ENCODE measurements at regions of chr22 and their contacts with region 1.

Region 1: GRCh38 chr22:50326959-50327710 is at the start of gene DENND6B:
- DNase-seq: peak; percentile 69
- ATAC-seq: peak; percentile 98
- H3K4me3 ChIP-seq: peak within 1 kb of the TSS; percentile 86
- H3K27ac ChIP-seq: peak within 1 kb of the TSS; percentile 85
- H3K4me1 ChIP-seq: peaks cover 8% of the 10 kb centered on the region
- H3K27me3 ChIP-seq: no peaks in the 10 kb centered on the region
- CTCF ChIP-seq: peak; percentile 84
- POLR2A ChIP-seq: peak; percentile 67
- RAD21 ChIP-seq: peak; percentile 75
- total RNA-seq, gene DENND6B: 0.36 and 0.56 TPM in 2 replicates

Region 2: DNA sequence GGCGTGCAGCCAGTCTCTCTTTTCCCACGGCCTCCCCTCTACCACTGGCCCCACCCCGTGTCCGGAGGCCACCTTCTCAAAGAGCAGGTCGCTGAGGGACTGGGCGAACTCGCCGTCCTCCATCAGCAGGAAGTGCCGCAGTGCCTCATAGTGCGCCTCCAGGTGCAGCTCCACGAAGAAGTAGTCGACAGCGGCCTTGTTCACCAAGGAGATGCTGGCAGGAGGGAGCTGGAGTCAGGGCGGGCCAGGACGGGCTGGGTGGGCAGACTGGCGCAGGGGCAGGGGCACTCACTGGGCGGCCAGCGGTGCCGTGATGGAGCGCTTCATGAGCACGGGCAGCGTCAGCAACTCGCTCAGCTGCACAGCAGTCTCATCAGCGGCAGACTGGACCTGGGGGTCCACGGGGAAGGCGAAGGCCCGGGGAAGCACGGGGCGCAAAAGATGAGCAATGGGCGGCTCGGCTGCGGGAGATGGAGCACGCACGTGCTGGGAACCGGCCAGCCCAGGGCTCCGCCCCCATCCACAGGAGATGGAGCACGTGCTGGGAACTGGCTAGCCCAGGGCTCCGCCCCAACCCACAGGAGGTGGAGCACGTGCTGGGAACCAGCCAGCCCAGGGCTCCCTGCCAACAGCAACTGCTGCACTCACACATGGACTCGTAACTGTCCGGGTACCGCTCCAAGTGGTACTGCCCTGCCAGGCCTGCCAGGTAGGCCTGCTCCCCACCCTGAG is 108.0 kb before region 1 on chr22:
- CTCF ChIA-PET with region 1: no interaction called
- POLR2A ChIA-PET with region 1: no interaction called
- dilution Hi-C with region 1: no loop called
- in situ Hi-C with region 1: no loop called
- intact Hi-C with region 1: no loop called
- DNase-seq: peak; percentile 74
- ATAC-seq: peak; percentile 76
- H3K4me3 ChIP-seq: no peak overlapping the region
- H3K27ac ChIP-seq: no peak overlapping the region
- H3K4me1 ChIP-seq: no peaks in the 10 kb centered on the region
- H3K27me3 ChIP-seq: no peaks in the 10 kb centered on the region
- CTCF ChIP-seq: no peak
- POLR2A ChIP-seq: no peak
- RAD21 ChIP-seq: no peak

Region 3: DNA sequence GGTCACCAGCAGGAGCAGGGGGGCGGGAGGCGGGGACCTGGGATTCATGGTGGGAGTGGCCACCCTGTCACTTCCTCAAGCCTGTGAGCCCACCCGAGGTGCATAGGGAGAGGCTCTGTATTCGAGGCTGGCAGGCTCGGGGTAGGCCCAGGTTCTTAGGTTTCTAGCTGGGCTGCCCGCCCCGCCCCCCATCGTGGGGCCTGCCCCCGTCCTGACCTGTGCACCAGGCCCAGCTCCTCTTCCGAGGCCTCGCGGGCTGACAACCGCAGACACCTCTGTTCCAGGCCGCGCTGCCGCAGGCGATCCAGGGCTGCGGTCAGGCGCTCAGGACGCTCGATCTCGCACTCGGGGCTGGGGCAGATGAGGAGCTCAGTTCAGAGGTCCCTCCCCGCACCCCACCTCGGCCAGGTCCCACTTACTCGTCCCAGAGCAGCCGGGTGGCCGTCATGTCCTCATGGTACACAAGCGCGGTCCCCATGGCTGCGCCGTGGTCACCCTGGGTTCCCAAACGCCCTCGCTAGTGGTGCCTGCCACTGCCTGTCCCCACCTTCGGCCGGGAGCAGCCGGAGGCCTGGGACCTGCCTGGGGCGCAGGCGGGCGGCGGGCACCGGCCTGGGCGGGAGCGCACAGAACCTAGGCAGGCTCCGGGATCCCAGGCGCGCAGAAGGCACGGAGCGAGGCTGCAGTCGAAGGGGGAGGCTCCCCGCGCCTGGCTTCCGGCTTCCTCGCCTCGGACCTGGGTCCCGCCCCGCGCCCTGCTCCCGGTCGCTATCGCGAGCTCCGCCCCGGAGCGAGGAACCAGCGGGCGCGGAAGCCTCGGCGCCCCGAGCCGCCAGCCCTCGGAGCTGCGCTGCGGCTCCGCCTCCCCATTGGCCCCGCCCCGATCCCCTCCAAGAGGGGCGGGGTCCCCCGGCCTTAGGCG is 76.3 kb before region 1 on chr22 and contains the start of gene HDAC10:
- CTCF ChIA-PET with region 1: no interaction called
- POLR2A ChIA-PET with region 1: interaction called, 6 read pairs
- dilution Hi-C with region 1: no loop called
- in situ Hi-C with region 1: loop called (anchors 5 kb)
- intact Hi-C with region 1: loop called (anchors 2 kb)
- DNase-seq: peak; percentile 74
- ATAC-seq: peak; percentile 84
- H3K4me3 ChIP-seq: peak within 1 kb of the TSS; percentile 88
- H3K27ac ChIP-seq: peak within 1 kb of the TSS; percentile 28
- H3K4me1 ChIP-seq: peaks cover 12% of the 10 kb centered on the region
- H3K27me3 ChIP-seq: no peaks in the 10 kb centered on the region
- CTCF ChIP-seq: no peak
- POLR2A ChIP-seq: no peak
- RAD21 ChIP-seq: no peak
- total RNA-seq, gene HDAC10: 3.6 and 3.9 TPM in 2 replicates

Region 4: GRCh38 chr22:50276143-50276542 is 51.0 kb before region 1 on chr22:
- CTCF ChIA-PET with region 1: no interaction called
- POLR2A ChIA-PET with region 1: no interaction called
- dilution Hi-C with region 1: no loop called
- in situ Hi-C with region 1: loop called (anchors 10 kb)
- intact Hi-C with region 1: loop called (anchors 2 kb)
- DNase-seq: peak; percentile 43
- ATAC-seq: peak; percentile 19
- H3K4me3 ChIP-seq: no peak overlapping the region
- H3K27ac ChIP-seq: no peak overlapping the region
- H3K4me1 ChIP-seq: peaks cover 6% of the 10 kb centered on the region; the same call in 1 of the 2 replicates
- H3K27me3 ChIP-seq: no peaks in the 10 kb centered on the region
- CTCF ChIP-seq: peak; percentile 87
- POLR2A ChIP-seq: no peak
- RAD21 ChIP-seq: peak; percentile 35

Region 5: DNA sequence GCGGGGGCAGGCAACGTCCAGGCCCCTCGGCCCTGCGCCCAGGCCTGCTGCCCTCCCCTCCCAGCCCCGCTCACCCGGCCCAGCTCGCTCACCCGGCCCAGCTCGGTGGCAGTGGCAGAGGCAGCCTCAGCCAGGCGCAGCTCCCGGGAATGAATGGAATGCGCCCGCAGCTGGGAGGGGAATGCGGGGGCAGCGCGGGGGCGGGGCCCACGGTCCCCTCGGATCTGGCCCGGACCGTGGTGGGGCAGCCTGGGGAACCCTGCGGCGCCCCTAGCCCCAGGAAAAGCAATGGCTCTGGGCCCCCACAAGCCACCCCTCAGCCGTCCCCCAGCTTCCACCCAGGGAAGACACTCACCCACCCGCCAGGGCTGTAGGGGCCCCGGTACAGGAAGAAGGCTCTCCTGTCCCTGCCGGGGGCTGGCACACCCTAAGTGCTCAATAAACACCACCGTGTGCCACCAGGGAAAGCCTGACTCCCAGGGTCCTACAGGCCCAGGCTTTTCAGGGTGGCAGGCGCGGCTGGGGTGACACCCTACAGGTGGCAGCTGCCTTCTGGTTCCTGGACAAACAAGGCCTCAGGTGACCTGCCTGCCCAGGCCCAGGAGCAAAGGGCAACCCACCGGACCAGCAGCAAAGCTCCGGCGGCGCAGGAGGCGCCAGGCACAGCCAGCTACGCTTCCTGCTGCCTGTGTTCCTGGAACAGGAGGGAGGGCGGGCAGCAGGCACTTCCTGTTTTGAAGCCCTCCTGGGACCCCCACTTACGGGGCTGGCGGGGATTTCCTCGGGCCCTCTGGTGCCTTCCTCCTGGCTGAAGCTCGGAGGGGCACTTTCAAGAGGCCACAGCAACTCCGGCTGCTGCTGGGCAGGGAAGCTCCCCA is 33.5 kb before region 1 on chr22:
- CTCF ChIA-PET with region 1: interaction called, 4 read pairs
- POLR2A ChIA-PET with region 1: no interaction called
- dilution Hi-C with region 1: no loop called
- in situ Hi-C with region 1: no loop called
- intact Hi-C with region 1: loop called (anchors 5 kb)
- DNase-seq: peak; percentile 60
- ATAC-seq: peak; percentile 92
- H3K4me3 ChIP-seq: peak overlapping the region; percentile 41
- H3K27ac ChIP-seq: peak overlapping the region; percentile 100
- H3K4me1 ChIP-seq: peaks cover 34% of the 10 kb centered on the region
- H3K27me3 ChIP-seq: no peaks in the 10 kb centered on the region
- CTCF ChIP-seq: no peak
- POLR2A ChIP-seq: no peak
- RAD21 ChIP-seq: no peak

Region 6: DNA sequence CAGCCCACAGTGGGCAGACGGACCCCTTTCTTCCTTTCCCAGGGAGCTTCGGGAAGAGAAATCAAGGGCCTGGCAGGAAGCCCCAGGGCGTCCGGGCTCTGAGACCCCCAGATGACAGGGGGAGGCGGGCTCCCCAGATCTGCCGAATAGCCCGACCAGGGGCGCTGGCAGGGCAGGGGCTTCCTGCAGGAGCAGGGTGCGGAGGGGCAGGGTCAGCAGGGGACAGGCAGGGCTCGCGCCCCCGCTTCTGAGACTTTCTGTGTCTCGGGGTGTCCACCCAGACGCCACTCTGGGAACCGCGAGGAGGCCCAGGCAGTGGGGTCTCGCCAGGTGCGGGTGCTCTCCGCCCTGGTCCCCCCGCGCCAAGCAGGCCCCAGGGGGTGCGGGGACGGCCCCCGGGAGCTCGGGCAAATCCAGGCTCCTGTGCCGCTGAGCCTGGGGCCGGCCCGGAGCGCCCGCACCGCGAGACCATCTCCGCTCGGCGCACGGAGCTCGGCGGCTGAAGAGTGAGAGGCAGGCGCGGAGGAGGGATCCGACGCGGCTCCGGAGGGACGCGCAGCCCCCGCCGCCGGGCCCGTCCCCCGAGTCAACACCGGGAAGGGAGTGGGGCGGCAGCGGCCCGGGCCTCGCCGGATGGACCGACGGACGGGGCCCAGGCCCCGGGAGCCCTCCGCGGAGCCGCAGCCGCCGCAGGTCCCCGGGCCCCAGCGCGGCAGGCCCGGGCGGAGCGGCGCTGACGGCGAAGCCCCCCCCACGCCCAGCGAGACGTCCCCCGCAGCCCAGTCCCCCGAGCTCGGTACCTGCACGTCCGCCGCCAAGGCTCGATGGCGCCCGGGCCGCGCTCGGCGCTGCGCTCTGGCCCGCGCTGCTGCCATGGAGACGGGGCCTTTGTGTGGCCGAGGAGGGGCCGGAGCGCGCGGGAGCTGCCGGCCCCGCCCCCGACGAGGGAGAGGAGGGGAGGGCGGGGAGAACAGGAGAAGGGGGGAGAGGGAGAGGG is 20.1 kb before region 1 on chr22 and contains the start of gene PLXNB2:
- CTCF ChIA-PET with region 1: no interaction called
- POLR2A ChIA-PET with region 1: interaction called, 4 read pairs
- dilution Hi-C with region 1: no loop called
- in situ Hi-C with region 1: no loop called
- intact Hi-C with region 1: loop called (anchors 2 kb)
- DNase-seq: peak; percentile 80
- ATAC-seq: peak; percentile 61
- H3K4me3 ChIP-seq: peak within 1 kb of the TSS; percentile 97
- H3K27ac ChIP-seq: peak within 1 kb of the TSS; percentile 96
- H3K4me1 ChIP-seq: peaks cover 48% of the 10 kb centered on the region
- H3K27me3 ChIP-seq: no peaks in the 10 kb centered on the region
- CTCF ChIP-seq: no peak
- POLR2A ChIP-seq: peak; percentile 69
- RAD21 ChIP-seq: no peak
- total RNA-seq, gene PLXNB2: 73.1 and 84.7 TPM in 2 replicates

Region 7: GRCh38 chr22:50396751-50397370 is 69.7 kb after region 1 on chr22:
- CTCF ChIA-PET with region 1: no interaction called
- POLR2A ChIA-PET with region 1: no interaction called
- dilution Hi-C with region 1: no loop called
- in situ Hi-C with region 1: no loop called
- intact Hi-C with region 1: no loop called
- DNase-seq: peak; percentile 20
- ATAC-seq: peak; percentile 64
- H3K4me3 ChIP-seq: no peak overlapping the region
- H3K27ac ChIP-seq: no peak overlapping the region; the same call in 1 of the 2 replicates
- H3K4me1 ChIP-seq: peaks cover 11% of the 10 kb centered on the region
- H3K27me3 ChIP-seq: no peaks in the 10 kb centered on the region
- CTCF ChIP-seq: no peak
- POLR2A ChIP-seq: no peak
- RAD21 ChIP-seq: no peak